Activated CD8-positive, alpha-beta T cell treated with anti-CD3 and anti-CD28 coated beads for 36 hours (primary cell): ENCODE measurements at regions of chr16 and their contacts with region 1.

Region 1: DNA sequence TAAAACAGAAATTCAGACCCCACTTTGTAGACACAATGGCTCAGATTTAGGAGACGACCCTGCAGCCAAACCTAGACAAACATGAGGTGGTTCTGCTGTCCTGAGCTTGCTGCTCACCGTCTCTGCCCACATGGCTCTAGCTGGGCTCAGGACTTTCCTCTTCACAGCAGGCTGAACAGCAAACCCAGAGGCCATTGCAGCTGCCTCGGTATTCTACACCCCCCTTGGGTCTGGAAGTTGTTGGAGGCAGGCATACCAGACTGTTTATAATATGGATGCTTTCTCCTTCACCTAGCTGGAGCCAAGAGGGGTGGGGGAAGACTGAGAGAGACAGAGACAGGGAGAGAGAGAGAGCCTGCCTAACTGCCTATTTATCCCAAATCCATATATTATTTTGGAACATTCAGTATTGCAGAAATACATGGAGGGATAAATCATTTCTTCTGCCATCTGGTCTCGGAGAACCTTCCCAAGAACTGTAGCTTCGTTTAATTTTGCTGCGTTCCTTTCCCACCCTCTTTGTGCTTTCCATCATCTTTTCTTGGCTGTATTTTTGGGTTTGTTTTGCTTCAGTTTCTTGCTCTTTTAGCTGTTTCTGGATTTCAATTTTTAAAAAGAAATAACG is 628.2 kb upstream of the RBFOX1 start:
- DNase-seq: no peak
- ATAC-seq: no peak
- H3K4me3 Mint-ChIP-seq: no peak overlapping the region
- H3K27ac Mint-ChIP-seq: no peak overlapping the region
- H3K4me1 Mint-ChIP-seq: no peaks in the 10 kb centered on the region
- H3K27me3 Mint-ChIP-seq: no peaks in the 10 kb centered on the region
- CTCF ChIP-seq: no peak

Region 2: GRCh38 chr16:6643080-6643686 is 61.2 kb before region 1 on chr16:
- CTCF ChIA-PET with region 1: no interaction called
- POLR2A ChIA-PET with region 1: no interaction called
- intact Hi-C with region 1: loop called (anchors 10 kb)
- DNase-seq: peak; percentile 67
- ATAC-seq: no peak
- H3K4me3 Mint-ChIP-seq: no peak overlapping the region
- H3K27ac Mint-ChIP-seq: no peak overlapping the region
- H3K4me1 Mint-ChIP-seq: no peaks in the 10 kb centered on the region
- H3K27me3 Mint-ChIP-seq: peaks cover 7% of the 10 kb centered on the region
- CTCF ChIP-seq: peak; percentile 91

Region 3: GRCh38 chr16:6777624-6778023 is 73.2 kb after region 1 on chr16:
- CTCF ChIA-PET with region 1: no interaction called
- POLR2A ChIA-PET with region 1: no interaction called
- intact Hi-C with region 1: no loop called
- DNase-seq: no peak
- ATAC-seq: no peak
- H3K4me3 Mint-ChIP-seq: no peak overlapping the region
- H3K27ac Mint-ChIP-seq: no peak overlapping the region
- H3K4me1 Mint-ChIP-seq: no peaks in the 10 kb centered on the region
- H3K27me3 Mint-ChIP-seq: no peaks in the 10 kb centered on the region
- CTCF ChIP-seq: no peak

Region 4: GRCh38 chr16:6884002-6884401 is 179.6 kb after region 1 on chr16:
- CTCF ChIA-PET with region 1: no interaction called
- POLR2A ChIA-PET with region 1: no interaction called
- intact Hi-C with region 1: no loop called
- DNase-seq: no peak
- ATAC-seq: no peak
- H3K4me3 Mint-ChIP-seq: no peak overlapping the region
- H3K27ac Mint-ChIP-seq: no peak overlapping the region
- H3K4me1 Mint-ChIP-seq: no peaks in the 10 kb centered on the region
- H3K27me3 Mint-ChIP-seq: no peaks in the 10 kb centered on the region
- CTCF ChIP-seq: no peak